Left ventricle myocardium superior (tissue), 1 donor: ENCODE measurements at regions of chr12 and their contacts with region 1.

Region 1: DNA sequence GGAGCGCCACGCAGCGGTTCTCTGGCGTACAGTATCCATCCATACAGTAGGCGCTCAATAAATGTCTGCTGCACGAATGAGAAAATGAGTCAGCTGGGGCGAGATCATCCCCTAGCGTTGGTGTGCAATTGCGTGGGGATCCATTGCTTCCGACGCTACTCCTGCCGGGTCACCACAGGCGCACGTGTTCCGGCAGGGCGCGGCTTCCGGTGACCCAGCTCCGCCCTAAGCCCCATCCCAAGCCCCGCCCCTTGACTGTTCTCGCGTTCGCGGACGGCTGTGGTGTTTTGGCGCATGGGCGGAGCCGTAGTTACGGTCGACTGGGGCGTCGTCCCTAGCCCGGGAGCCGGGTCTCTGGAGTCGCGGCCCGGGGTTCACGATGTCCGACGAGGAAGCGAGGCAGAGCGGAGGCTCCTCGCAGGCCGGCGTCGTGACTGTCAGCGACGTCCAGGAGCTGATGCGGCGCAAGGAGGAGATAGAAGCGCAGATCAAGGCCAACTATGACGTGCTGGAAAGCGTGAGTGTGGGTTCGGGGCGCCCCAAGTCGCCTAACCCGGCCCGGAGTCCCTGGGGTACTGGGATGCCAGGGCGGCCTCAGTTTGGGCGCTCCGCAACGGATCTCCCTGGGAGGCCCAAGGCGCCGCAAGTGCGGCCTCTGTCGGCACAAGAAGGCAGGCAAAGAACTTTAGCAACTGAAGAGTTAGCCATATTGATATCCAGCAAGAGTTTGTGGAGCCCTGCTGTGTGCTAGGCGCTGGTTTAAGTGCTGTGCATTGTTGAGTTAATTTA is at the start of gene PSMD9:
- DNase-seq: peak; percentile 98
- ATAC-seq: peak; percentile 99
- total RNA-seq, gene PSMD9: 30.3 TPM

Region 2: GRCh38 chr12:121762269-121762668 is 126.4 kb before region 1 on chr12:
- intact Hi-C with region 1: no loop called
- DNase-seq: no peak
- ATAC-seq: peak; percentile 91

Region 3: DNA sequence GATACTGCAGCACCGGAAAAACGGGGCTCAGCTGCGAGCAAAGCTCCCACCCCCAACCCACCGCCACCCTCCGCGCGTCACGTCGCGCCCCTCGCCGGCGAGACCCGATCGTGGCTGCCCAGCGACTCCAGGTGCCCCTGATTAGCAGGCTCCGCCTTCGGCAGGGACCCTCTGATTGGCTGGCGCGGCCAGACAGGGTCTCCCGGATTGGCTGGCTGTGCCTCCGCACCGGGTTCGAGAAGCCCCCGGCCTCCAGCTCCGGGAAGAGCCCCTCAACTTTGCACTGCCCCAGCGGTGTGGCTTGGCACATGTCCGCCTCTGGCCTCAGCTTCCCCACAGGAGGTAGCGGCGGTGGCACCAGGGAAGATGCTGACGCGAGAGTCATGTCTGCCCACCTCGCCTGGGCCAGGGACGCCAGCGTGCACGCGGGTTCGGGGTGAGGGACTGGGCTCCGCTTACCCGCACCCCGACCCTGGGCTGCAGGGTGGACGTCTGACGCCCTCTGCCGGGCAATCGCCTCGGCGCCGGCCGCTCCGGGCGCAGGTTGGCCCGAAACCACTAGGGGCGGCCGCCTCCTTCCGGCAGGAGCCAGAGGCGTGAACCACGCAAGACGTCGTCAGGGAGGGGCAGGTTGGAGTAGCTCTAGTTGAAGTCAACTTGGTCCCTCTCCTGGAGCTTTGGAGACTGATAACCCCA is 94.7 kb before region 1 on chr12:
- intact Hi-C with region 1: loop called (anchors 10 kb)
- DNase-seq: peak; percentile 95
- ATAC-seq: peak; percentile 62

Region 4: DNA sequence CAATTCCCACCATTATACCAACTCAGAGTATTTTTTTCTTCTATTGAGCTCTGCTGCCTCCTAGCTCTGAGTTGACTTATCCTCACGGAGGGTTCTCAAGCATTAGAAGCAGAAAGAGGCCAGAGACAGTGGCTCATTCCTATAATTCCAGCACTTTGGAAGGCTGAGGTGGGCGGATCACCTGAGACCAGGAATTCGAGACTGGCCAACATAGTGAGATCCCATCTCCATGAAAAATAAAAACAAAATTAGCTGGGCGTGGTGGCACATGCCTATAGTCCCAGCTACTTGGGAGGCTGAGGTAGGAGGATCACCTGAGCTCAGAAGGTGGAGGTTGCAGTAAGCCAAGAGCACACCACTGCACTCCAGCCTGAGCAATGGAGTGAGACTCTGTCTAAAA is 51.0 kb before region 1 on chr12:
- intact Hi-C with region 1: no loop called
- DNase-seq: no peak
- ATAC-seq: no peak

Region 5: GRCh38 chr12:122006186-122006926 is 117.7 kb after region 1 on chr12:
- intact Hi-C with region 1: no loop called
- DNase-seq: no peak
- ATAC-seq: peak; percentile 52